Activated T-helper 1 cell treated with anti-CD3 and anti-CD28 coated beads, Interleukin-12 subunit alpha, Interleukin-12 subunit beta, Interleukin-2, Interleukin-4 antibody, amounts not matched to agents 30 ng/mL and 10 ng/mL and 1 ng/mL, durations not matched to agents 14 hours and 24 hours and 36 hours (primary cell): ENCODE measurements at regions of chr12 and their contacts with region 1.

Region 1: GRCh38 chr12:107356266-107356936 is 263.1 kb upstream of the CRY1 start:
- DNase-seq: no peak
- H3K4me3 Mint-ChIP-seq: peak overlapping the region; percentile 19
- H3K27ac Mint-ChIP-seq: no peak overlapping the region
- H3K4me1 Mint-ChIP-seq: peaks cover 74% of the 10 kb centered on the region
- H3K27me3 Mint-ChIP-seq: peaks cover 2% of the 10 kb centered on the region

Region 2: DNA sequence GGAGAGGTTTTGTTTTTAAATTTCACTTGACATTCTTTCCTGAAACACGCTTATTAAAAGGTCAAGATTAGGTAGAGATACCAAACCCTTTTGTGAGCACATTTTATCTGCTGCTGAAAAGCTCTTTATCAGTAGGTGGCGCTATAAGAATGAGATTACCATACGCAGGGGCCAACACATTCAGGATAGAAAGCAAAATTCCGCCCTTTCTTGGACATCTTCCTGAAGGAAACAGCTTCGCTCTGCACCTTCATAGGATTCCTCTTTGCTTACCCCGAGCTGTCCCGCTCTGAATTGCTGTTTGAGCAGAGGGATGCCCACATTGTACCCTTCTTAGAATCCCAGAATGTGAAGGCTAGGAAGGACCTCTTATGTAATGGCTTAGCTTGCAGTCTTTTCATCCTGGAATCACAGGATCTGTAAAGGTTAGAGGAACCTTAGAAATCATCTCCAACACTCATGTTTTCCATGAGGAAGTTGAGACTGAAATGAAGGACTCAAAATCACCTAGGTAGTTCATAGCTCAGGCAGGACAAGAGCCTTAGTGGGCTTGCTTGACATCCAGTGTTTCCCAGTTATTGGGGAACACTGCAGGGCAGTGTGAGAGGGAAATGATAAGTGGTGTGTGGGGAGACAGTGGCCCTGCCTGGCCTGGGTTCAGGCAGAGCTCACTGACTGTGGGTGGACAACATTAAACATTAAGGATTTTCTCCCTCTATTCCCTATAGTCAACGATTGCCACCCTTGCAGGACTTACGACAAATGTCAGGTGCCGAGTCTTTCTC is 224.4 kb before region 1 on chr12:
- intact Hi-C with region 1: no loop called
- DNase-seq: peak; percentile 6
- H3K4me3 Mint-ChIP-seq: no peak overlapping the region
- H3K27ac Mint-ChIP-seq: no peak overlapping the region
- H3K4me1 Mint-ChIP-seq: no peaks in the 10 kb centered on the region
- H3K27me3 Mint-ChIP-seq: no peaks in the 10 kb centered on the region

Region 3: DNA sequence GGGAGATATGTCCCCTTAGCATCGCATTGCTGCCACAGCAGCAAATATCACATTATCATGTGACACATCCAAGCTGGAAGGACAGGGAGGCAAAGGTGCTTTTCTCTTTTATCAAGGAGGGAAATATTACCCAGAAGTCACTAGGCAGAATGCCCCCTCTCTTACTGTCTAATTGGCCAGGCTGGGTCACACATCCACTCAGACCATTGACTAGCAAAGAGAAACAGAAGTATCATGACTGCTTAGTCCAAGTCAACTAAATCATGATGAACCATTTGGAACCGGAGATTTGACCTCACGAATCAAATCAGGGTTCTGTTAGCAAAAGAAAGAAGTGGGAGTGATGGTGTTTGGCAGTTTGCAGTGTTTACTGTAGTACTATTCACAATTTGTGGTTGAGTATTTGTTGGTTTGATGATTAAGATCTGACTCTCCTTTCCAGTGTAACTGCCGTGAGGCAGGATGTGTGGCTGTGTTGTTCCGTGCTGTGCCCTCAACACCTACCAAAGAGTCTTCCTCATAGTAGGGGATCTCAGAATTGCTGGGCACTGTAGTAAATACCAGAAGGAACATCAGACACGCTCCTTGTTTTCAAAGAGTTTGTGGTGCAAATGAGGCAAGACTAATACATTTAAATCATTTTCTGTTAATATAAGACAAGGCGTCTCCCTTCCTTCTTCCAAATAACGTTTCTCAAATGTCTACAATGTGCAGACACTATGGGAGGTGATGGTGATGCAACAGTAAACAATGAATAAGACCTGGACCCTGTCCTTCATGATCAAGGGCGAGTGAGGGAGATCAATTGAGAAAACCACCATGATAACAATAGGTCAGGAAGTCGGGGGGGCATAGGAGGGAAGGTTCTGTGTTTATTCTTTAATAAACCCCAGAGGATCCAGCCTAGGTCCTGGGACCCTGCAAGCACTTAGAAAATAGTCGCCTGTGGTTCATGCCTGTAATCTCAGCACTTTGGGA is 68.7 kb before region 1 on chr12:
- intact Hi-C with region 1: loop called (anchors 1 kb)
- DNase-seq: peak; percentile 42
- H3K4me3 Mint-ChIP-seq: peak overlapping the region; percentile 44
- H3K27ac Mint-ChIP-seq: peak overlapping the region; percentile 82
- H3K4me1 Mint-ChIP-seq: peaks cover 12% of the 10 kb centered on the region
- H3K27me3 Mint-ChIP-seq: peaks cover 3% of the 10 kb centered on the region

Region 4: DNA sequence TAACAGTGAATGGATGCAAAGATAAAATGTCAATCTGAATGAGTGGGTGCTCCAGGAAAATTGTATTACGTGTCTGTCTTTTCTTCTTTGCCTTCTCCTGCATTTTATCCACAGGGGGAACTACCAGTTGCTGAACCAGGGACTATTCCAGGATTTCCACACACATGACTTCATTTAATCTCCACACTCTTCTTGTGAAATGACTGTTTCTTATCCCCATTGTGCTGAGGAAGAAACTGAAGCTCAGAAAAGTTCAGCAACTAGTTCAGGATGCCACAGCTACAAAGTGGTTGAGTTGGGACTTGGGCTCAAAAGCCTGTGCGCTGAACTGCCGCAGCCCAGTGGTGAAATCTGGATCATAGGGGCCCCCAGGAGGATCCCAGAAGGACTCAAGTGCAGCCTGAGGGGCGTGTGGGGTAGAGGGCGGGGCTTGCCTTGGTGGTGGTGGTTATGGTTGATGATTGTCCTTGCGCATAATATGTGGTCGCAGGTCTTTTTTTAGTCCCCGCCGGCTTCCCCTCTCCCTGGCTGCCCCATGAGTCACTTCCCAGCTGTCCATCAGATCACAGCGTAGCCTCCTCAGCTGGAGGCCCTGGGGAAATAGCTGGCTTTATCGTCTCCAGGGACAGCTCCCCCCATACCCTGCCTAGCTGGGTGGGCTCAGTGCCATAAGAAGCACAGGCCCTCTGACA is 27.8 kb before region 1 on chr12:
- intact Hi-C with region 1: loop called (anchors 1 kb)
- DNase-seq: no peak
- H3K4me3 Mint-ChIP-seq: no peak overlapping the region
- H3K27ac Mint-ChIP-seq: no peak overlapping the region
- H3K4me1 Mint-ChIP-seq: peaks cover 83% of the 10 kb centered on the region
- H3K27me3 Mint-ChIP-seq: no peaks in the 10 kb centered on the region